ENCODE measurements at regions of chr1 and their contacts with region 1.

Region 1: DNA sequence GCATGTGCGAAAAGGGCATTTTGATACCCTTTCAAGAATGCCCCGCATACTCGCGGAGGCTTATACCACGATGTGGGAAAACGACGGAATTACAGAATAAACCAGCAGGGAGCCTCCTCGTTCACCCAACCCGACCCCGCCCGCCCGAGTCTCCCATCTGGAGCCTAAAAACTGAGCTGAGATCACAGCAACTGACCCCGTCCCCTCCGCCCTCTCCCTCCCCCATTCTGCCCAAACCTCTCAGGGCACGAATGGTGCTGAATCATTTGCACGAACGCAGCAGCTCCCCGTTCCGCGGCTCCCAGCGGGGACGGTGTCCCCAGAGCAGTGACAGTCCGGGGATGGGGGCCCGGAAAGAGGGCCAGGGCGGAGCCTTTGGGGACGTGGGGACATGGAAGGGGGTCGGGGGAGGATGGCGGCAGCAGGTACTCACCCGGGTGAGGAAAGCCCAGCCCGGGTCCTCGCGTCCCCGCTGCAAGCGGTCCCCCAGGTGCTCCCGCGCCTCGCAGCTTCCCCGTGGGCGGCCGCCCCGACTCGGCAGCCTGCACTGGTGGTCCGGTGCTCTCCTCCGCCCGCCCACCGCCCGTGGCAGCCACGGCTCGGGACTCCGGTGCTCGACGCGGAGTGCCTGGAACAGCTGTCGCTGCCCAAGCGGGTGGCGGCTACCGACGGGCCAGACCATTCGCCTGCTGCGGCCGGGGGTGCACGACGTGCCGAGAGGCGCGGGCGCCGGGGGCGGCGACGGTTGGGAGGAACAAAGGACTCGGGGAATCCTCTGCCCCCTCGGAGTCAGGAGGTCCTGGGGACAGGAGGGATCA is at the start of gene TTLL7:
- DNase-seq: peak; percentile 59
- H3K4me3 Mint-ChIP-seq: peak within 1 kb of the TSS; percentile 74
- H3K27ac Mint-ChIP-seq: no peak within 1 kb of the TSS
- H3K4me1 Mint-ChIP-seq: peaks cover 7% of the 10 kb centered on the region
- H3K27me3 Mint-ChIP-seq: peaks cover 53% of the 10 kb centered on the region
- total RNA-seq, gene TTLL7: not detected

Region 2: GRCh38 chr1:84103197-84103992 is 104.7 kb after region 1 on chr1:
- CTCF ChIA-PET with region 1: no interaction called
- intact Hi-C with region 1: no loop called
- DNase-seq: peak; percentile 11
- H3K4me3 Mint-ChIP-seq: no peak overlapping the region
- H3K27ac Mint-ChIP-seq: no peak overlapping the region
- H3K4me1 Mint-ChIP-seq: peaks cover 4% of the 10 kb centered on the region
- H3K27me3 Mint-ChIP-seq: no peaks in the 10 kb centered on the region

Region 3: GRCh38 chr1:84298328-84298683 is 299.6 kb after region 1 on chr1:
- CTCF ChIA-PET with region 1: no interaction called
- intact Hi-C with region 1: loop called (anchors 5 kb)
- DNase-seq: peak; percentile 54
- H3K4me3 Mint-ChIP-seq: peak overlapping the region; percentile 81
- H3K27ac Mint-ChIP-seq: peak overlapping the region; percentile 28
- H3K4me1 Mint-ChIP-seq: peaks cover 35% of the 10 kb centered on the region
- H3K27me3 Mint-ChIP-seq: no peaks in the 10 kb centered on the region

Measured in activated naive CD4-positive, alpha-beta T cell treated with anti-CD3 and anti-CD28 coated beads for 36 hours (primary cell).